ENCODE measurements at regions of chr1 and their contacts with region 1.

Region 1: GRCh38 chr1:67735806-67736627 is 51.0 kb downstream of the GADD45A start:
- DNase-seq: peak; percentile 88
- H3K4me3 ChIP-seq: peak overlapping the region in 1 of 3 experiments; percentile 10
- H3K27ac ChIP-seq: peak overlapping the region; percentile 68
- H3K4me1 ChIP-seq: peaks cover 46% of the 10 kb centered on the region
- H3K27me3 ChIP-seq: no peaks in the 10 kb centered on the region
- CTCF ChIP-seq: no peak

Region 2: DNA sequence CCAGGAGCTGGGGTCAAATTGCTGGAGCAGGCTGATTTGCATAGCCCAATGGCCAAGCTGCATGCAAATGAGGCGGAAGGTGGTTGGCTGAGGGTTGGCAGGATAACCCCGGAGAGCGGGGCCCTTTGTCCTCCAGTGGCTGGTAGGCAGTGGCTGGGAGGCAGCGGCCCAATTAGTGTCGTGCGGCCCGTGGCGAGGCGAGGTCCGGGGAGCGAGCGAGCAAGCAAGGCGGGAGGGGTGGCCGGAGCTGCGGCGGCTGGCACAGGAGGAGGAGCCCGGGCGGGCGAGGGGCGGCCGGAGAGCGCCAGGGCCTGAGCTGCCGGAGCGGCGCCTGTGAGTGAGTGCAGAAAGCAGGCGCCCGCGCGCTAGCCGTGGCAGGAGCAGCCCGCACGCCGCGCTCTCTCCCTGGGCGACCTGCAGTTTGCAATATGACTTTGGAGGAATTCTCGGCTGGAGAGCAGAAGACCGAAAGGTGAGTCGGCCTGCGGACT is 50.9 kb before region 1 on chr1 and contains the start of gene GADD45A:
- CTCF ChIA-PET with region 1: no interaction called
- dilution Hi-C with region 1: no loop called
- in situ Hi-C with region 1: no loop called
- intact Hi-C with region 1: no loop called
- DNase-seq: peak; percentile 99
- H3K4me3 ChIP-seq: peak within 1 kb of the TSS; percentile 78 to 96 (median 79)
- H3K27ac ChIP-seq: peak within 1 kb of the TSS; percentile 97
- H3K4me1 ChIP-seq: peaks cover 26% of the 10 kb centered on the region
- H3K27me3 ChIP-seq: no peaks in the 10 kb centered on the region
- CTCF ChIP-seq: no peak
- total RNA-seq, gene GADD45A: 119 to 371 TPM

Region 3: DNA sequence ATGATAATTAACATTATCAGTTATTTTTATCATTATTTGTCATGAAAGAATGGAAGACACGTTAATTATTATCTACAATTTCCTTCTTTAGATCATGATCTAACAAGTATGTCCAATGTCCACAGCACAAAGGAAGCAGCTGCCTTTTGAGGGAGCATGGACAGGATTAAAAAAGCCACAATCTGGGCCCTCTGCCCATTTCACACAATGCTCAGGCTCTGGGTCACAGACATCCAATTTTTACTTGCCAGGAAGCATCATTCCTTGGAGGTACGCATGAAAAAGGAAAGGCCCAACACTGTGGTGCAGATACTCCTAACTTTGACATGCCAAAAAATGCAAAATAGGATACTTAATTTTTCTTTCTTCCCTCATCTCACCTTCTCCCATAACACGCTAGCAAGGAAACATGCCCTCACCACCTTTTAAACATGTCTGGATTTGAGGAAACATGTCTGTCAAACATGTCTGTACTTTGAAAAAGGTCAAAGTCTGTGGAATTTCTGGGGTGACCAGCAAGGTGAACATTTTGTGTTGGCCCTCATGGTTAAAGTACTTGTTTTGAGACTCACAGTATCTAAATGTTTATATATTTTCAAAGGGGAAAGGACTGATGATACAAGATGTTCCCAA is 11.0 kb before region 1 on chr1:
- CTCF ChIA-PET with region 1: no interaction called
- dilution Hi-C with region 1: no loop called
- in situ Hi-C with region 1: no loop called
- intact Hi-C with region 1: loop called (anchors 1 kb)
- DNase-seq: peak; percentile 85
- H3K4me3 ChIP-seq: no peak overlapping the region
- H3K27ac ChIP-seq: peak overlapping the region; percentile 89
- H3K4me1 ChIP-seq: peaks cover 57% of the 10 kb centered on the region
- H3K27me3 ChIP-seq: no peaks in the 10 kb centered on the region
- CTCF ChIP-seq: no peak

Region 4: DNA sequence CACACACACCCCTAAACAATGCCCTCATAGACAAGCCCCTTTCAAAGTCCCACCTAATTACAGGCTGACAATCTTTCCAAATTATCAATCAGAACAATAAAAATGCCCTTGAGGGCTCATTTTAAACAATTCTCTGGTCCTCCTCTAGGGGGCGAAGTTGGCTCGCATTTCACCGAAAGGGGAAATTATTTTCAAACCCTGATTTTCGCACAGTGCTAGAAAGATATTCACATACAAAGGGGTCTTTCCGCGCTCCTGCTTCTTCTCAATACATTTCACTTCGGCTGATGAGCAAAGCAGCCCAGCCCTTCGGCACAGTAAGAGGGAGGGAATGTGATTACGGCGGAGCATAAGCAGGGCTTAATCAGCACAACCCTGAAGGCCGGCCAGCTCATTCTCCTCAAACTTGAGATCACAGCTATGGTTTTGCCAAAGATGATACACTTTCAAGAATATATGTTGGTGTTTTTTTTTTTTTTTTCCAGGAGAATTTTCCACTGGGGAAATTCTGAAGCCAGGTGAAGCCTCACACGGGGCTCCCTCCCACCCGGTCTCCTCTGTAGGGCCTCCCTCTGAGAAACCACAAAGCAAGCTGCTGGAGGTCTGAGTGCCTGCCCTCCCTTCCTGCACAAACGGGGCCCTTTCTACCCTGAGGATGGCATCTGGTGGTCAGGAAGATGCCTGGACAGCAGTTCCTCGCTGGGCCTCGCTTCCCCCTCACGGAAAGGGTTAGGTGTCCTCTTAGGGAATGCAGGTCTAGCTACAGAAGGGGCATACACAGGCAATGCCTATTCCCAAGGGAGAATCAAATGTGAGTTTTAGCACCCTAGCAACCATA is 30.3 kb after region 1 on chr1:
- CTCF ChIA-PET with region 1: no interaction called
- dilution Hi-C with region 1: no loop called
- in situ Hi-C with region 1: no loop called
- intact Hi-C with region 1: no loop called
- DNase-seq: peak; percentile 70
- H3K4me3 ChIP-seq: no peak overlapping the region
- H3K27ac ChIP-seq: peak overlapping the region; percentile 65
- H3K4me1 ChIP-seq: peaks cover 26% of the 10 kb centered on the region
- H3K27me3 ChIP-seq: no peaks in the 10 kb centered on the region
- CTCF ChIP-seq: peak; percentile 65 to 68

Region 5: DNA sequence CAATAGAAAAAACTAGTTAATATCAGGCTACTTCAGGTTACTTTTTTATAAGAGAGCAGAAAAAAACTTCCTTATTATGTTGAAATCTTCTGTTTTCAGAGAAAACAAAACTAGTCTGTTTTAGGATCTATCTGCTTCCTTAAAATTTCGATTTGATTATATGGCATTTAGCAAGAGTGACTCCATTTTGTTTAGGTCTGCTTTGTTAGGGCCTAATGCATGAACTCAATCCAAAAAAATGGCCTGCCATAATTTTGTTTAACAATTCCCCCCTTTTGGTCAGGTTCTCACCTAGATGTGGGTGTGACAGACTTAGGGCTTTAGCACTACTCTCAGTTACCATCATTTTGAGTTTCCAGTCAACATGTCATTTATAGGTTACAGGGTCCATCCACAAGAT is 187.1 kb after region 1 on chr1:
- CTCF ChIA-PET with region 1: no interaction called
- dilution Hi-C with region 1: no loop called
- in situ Hi-C with region 1: no loop called
- intact Hi-C with region 1: no loop called
- DNase-seq: no peak
- H3K4me3 ChIP-seq: no peak overlapping the region
- H3K27ac ChIP-seq: no peak overlapping the region
- H3K4me1 ChIP-seq: peaks cover 14% of the 10 kb centered on the region
- H3K27me3 ChIP-seq: no peaks in the 10 kb centered on the region
- CTCF ChIP-seq: no peak

Measured in mammary epithelial cell (primary cell).